ENCODE measurements at regions of chr19 and their contacts with region 1.

Region 1: GRCh38 chr19:47697863-47698609 is 15.2 kb upstream of the EHD2 start:
- DNase-seq: peak; percentile 73 to 87 (median 81)
- H3K4me3 ChIP-seq: no peak overlapping the region
- H3K27ac ChIP-seq: no peak overlapping the region
- H3K4me1 ChIP-seq: peaks cover 0 to 3% (median 0%) of the 10 kb centered on the region in 3 donors
- H3K27me3 ChIP-seq: no peaks in the 10 kb centered on the region
- CTCF ChIP-seq: peak; percentile 97

Region 2: DNA sequence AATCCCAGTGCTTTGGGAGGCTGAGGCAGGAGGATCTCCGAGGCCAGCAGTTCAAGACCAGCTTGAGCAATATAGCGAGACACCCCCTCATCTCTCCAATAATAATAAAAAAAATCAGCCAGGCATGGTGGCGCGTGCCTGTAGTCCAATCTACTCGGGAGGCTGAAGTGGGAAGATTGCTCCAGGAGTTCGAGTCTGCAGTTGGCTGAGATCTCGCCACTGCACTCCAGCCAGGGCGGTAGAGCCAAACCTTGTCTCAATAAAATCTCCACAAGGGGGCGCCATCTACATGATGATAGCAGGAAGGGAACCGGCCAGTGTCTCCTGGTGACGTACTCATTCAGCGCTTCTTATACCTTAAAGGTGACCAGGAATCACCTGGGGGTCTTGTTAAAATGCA is 402.0 kb before region 1 on chr19:
- intact Hi-C with region 1: loop called (anchors 10 kb)
- DNase-seq: peak in 4 of 5 donors; percentile 69 to 90 (median 78)
- H3K4me3 ChIP-seq: no peak overlapping the region
- H3K27ac ChIP-seq: no peak overlapping the region
- H3K4me1 ChIP-seq: no peaks in the 10 kb centered on the region
- H3K27me3 ChIP-seq: no peaks in the 10 kb centered on the region
- CTCF ChIP-seq: peak; percentile 76

Region 3: DNA sequence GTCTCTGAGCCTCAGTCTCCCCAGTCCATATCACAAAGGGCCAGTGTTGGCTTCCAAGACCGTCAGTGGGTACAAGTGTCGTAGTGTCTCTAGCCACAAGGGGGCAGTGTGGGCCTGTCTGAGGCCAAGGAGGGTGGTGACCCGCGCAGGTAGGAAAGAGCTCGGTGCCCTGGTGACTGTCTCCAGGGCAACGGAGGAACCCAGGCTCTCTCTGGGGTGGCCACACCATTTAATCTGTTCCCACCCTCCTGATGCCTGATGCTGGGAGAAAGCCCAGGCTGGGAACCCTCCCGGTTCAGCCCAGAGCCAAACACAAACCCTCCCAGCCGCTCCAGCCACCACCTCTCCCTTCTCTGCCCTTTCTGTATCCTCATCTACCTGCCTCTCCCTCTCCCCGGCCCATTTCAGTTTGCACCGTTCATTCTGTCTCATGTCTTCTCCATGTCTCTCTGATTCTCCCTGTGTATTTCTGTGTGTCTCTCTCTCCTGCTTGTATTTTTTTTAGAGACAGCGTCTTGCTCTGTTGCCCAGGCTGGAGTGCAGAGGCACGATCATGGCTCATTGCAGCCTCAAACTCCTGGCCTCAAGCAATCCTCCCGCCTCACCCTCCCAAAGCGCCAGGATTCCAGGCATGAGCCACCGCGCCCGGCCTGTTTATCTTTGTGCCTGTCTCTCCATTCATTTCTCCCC is 261.2 kb before region 1 on chr19:
- intact Hi-C with region 1: loop called (anchors 5 kb)
- DNase-seq: peak; percentile 78 to 87 (median 82)
- H3K4me3 ChIP-seq: no peak overlapping the region
- H3K27ac ChIP-seq: no peak overlapping the region
- H3K4me1 ChIP-seq: no peaks in the 10 kb centered on the region
- H3K27me3 ChIP-seq: peaks cover 4% of the 10 kb centered on the region
- CTCF ChIP-seq: peak; percentile 89

Region 4: DNA sequence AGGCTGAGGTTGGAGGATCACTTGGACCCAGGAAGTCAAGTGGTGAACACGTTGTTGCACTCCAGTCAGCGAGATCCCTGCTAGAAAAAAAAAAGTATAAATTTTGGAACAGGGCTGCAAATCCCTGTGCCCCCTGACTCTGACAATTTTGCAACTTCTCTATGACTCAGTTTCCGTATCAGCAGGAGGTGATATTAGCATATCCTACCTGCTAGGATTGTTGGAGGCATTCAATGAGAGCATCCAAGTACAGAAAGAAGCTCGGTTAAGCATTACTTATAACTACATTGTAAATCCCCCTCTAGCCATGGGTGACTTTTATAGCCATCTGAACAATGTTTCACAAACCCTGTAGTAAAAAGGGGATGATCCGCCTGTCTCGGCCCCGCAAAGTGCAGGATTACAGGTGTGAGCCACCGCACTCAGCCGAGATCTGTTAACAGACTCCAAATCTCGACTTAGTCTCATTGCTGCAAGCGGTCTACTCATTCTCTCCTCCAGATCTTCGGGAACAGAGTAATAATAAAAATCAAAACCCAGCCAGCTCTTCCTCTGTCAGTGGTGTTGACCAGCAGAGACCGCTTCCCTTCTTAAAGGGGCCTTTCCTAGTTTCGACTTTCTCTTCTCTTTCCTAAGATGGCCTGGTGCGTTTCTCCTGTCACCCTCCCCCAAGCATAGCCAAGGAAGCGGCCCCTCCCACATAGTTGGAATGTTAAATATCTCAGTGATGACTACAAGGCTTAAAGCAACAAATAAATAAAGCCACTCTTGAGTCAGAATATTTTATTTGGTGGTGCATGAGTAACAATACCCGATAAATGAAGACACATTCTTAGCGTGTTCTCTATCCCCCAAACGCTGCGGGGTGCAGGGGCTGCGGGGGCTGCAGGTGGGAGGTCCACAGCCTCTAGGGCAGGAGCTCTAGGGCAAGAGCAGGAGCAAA is 99.4 kb before region 1 on chr19:
- intact Hi-C with region 1: no loop called
- DNase-seq: peak in 4 of 5 donors; percentile 60 to 93 (median 72)
- H3K4me3 ChIP-seq: peak overlapping the region; percentile 46 to 64 (median 58)
- H3K27ac ChIP-seq: peak overlapping the region in 1 of 2 donors; percentile 72
- H3K4me1 ChIP-seq: peaks cover 0 to 5% (median 5%) of the 10 kb centered on the region in 3 donors
- H3K27me3 ChIP-seq: no peaks in the 10 kb centered on the region
- CTCF ChIP-seq: no peak